PC-9 (cell line): ENCODE measurements at regions of chr7 and their contacts with region 1.

Region 1: DNA sequence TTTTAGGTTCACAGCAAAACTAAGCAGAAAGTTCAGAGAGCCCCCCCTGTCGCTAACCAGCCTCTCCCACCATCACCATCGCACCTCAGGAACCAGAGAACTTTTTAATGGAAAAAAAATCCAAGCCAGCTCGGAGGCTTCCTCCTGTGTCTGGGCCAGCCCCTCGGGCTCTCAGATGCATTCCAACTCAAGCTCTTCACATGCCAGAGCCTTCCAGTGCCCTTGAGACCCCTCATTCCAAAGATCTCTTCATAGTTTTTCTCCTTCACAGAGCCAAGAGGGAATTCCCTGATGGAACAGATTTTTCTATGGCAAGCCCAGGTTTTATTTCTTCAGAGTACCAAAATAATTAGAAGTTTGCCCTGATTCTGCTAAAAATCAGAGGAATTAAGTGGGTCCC is 153.4 kb upstream of the LANCL2 start:
- DNase-seq: no peak
- H3K4me3 ChIP-seq: no peak overlapping the region
- H3K27ac ChIP-seq: no peak overlapping the region
- H3K4me1 ChIP-seq: peaks cover 14% of the 10 kb centered on the region
- H3K27me3 ChIP-seq: no peaks in the 10 kb centered on the region
- CTCF ChIP-seq: no peak

Region 2: DNA sequence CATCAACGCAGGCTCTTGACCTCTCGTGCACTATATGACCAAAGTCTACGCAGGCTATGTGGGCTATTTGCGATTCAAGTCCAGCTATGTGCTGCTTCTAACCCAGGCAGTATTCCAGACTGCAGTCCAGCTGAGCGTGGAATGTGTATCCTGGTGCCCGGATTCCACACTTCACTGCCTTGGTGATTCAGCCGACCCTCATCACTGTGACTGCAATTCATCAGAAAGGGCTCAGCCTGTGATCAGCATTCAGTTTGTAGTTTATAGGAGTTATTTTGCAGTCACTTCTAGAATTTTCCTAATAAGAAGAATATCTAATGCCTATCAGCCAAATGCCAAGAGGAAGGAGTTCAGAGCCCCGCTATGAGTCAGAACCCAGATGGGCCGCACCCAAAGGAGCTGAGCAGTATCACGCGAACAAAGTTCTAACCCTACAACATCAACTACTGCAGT is 33.6 kb after region 1 on chr7:
- CTCF ChIA-PET with region 1: interaction called, 3 read pairs
- POLR2A ChIA-PET with region 1: no interaction called
- intact Hi-C with region 1: loop called (anchors 2 kb)
- DNase-seq: peak; percentile 63 to 72
- H3K4me3 ChIP-seq: no peak overlapping the region
- H3K27ac ChIP-seq: no peak overlapping the region
- H3K4me1 ChIP-seq: peaks cover 17% of the 10 kb centered on the region
- H3K27me3 ChIP-seq: no peaks in the 10 kb centered on the region
- CTCF ChIP-seq: no peak

Region 3: DNA sequence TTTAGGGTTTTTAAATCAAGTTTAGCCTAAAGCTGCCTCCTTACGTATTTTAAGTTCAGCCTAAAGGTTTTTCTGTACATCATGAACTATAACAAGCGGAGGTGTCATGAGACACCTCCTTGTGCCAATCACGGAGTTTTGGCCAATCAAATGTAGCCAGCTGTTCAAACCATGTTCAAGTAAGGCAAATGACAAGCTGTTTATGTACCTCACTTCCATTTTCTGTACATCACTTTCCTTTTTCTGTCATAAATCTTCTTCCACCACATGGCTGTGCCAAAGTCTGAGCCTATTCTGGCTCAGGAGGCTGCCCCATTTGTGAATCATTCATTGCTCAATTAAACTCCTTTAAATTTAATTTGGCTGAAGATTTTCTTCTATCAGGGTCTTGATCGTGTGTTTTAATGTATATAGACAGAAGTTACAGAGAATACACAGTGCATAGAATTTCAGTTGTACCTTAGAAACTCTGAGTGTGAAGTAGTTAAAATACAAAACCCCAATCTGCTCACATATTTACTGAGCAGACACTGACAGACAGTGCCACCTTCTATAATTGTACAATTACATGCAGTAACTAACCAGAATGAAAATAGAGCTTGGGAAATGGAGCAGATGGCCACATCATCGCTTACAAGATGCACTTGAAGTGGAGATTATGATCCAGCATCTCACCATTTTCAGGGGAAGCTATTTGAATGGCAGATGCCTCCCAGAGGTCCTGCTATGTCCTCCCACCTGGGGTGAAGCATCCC is 76.5 kb after region 1 on chr7:
- CTCF ChIA-PET with region 1: no interaction called
- POLR2A ChIA-PET with region 1: no interaction called
- intact Hi-C with region 1: no loop called
- DNase-seq: no peak
- H3K4me3 ChIP-seq: no peak overlapping the region
- H3K27ac ChIP-seq: no peak overlapping the region
- H3K4me1 ChIP-seq: no peaks in the 10 kb centered on the region
- H3K27me3 ChIP-seq: peaks cover 83% of the 10 kb centered on the region
- CTCF ChIP-seq: no peak